Upper lobe of right lung (tissue), 1 donor: ENCODE measurements at regions of chr16 and their contacts with region 1.

Region 1: GRCh38 chr16:28924732-28925385 is at the start of gene RABEP2:
- DNase-seq: peak; percentile 98
- ATAC-seq: peak; percentile 94
- H3K4me3 ChIP-seq: peak within 1 kb of the TSS; percentile 68
- H3K27ac ChIP-seq: peak within 1 kb of the TSS; percentile 96
- H3K4me1 ChIP-seq: peaks cover 7% of the 10 kb centered on the region
- H3K27me3 ChIP-seq: no peaks in the 10 kb centered on the region
- CTCF ChIP-seq: no peak
- total RNA-seq, gene RABEP2: 23.4 TPM

Region 2: DNA sequence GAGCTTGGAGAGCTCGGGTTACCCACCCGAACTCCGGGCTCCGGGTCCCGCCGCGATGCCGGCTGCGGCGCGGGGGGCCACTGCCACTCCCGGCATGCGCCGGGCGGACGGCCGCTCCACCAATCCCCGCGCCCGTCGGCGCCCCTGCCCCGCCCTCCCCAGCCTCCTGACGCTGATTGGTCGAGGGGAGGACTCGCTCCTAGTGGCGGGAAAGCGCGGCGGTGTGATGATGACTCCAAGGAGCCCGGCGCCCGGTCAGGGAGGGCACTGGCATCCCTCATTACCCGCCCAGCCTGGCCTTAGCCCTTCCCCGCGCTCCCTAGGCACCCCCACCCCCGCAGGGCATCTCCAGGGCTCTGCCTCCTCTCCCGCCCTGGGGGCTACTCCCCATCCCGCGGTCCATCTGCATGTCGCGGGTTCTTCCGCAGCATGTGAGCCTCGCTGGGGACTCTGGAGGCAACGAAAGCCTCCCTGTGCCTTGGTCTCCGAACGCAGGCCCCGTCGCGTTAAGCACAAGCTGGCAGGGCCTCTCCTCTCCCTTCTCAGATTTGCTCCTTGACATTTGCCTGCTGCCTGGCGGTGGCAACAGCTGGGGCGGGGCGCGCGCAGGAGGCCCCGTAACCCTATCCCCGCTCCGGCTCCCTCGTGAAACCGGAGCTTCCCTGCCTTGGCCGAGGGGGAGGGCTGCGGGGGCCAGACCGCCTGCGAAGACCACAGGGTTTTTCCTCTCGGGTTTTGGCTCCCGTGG is 44.8 kb before region 1 on chr16:
- intact Hi-C with region 1: loop called (anchors 10 kb)
- DNase-seq: peak; percentile 93
- ATAC-seq: peak; percentile 96
- H3K4me3 ChIP-seq: peak overlapping the region; percentile 79
- H3K27ac ChIP-seq: no peak overlapping the region
- H3K4me1 ChIP-seq: peaks cover 11% of the 10 kb centered on the region
- H3K27me3 ChIP-seq: peaks cover 19% of the 10 kb centered on the region
- CTCF ChIP-seq: no peak